MCF 10A (cell line): ENCODE measurements at regions of chr17 and their contacts with region 1.

Region 1: DNA sequence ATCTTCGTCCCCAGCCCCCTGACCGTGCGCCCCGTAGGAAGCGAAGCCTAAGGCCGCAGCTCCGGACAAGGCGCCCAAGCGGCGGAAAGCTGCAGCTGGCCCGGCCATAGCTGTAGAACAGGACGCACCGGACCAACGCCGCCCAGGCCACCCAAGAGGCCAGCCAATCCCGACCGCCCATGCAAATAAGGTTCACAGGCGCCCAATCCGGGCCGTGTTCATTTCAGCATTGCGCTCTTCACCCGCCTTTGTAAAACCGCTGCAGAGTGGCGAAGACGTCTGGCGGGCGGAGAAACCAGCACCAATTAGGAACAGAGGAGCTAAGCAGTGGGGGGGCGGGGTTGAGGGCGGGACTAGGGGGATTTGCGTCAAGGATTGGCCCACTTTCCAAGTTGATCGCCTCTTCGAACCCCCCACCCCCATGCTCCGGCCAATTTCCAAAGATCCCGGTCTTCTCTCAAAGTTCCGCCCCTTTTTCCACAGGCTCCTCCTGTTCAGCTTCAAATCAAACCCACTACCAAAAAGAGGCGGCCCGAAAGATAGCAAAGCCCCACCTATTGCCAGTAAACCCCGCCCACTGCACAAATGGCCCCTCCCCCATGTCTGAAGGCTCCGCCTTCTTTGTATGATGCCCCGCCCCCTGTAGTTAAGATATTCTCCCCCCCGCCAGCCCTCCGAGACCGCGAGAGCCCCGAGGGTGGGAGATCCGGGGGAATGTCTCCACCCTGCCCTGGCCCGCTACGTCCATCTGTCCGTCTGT is at the start of gene TMEM256:
- DNase-seq: peak; percentile 99
- H3K4me3 Mint-ChIP-seq: peak within 1 kb of the TSS; percentile 78
- H3K27ac Mint-ChIP-seq: peak within 1 kb of the TSS; percentile 86
- H3K4me1 Mint-ChIP-seq: peaks cover 16% of the 10 kb centered on the region
- H3K27me3 Mint-ChIP-seq: no peaks in the 10 kb centered on the region
- CTCF ChIP-seq: no peak
- total RNA-seq, gene TMEM256: 35.2 and 42.9 TPM in 2 replicates

Region 2: GRCh38 chr17:7380321-7380720 is 23.8 kb before region 1 on chr17:
- CTCF ChIA-PET with region 1: interaction called, 4 read pairs
- POLR2A ChIA-PET with region 1: interaction called, 21 read pairs
- intact Hi-C with region 1: no loop called
- DNase-seq: peak; percentile 24
- H3K4me3 Mint-ChIP-seq: peak overlapping the region; percentile 94
- H3K27ac Mint-ChIP-seq: peak overlapping the region; percentile 90
- H3K4me1 Mint-ChIP-seq: peaks cover 13% of the 10 kb centered on the region
- H3K27me3 Mint-ChIP-seq: no peaks in the 10 kb centered on the region
- CTCF ChIP-seq: no peak